Calu3 (cell line): ENCODE measurements at regions of chr16 and their contacts with region 1.

Region 1: GRCh38 chr16:12095275-12096156 is 119.0 kb downstream of the SNX29 start:
- DNase-seq: peak; percentile 76
- H3K4me3 Mint-ChIP-seq: no peak overlapping the region
- H3K27ac Mint-ChIP-seq: no peak overlapping the region
- H3K4me1 Mint-ChIP-seq: peaks cover 13% of the 10 kb centered on the region
- H3K27me3 Mint-ChIP-seq: no peaks in the 10 kb centered on the region
- CTCF ChIP-seq: peak; percentile 94

Region 2: GRCh38 chr16:12141073-12141951 is 45.8 kb after region 1 on chr16:
- CTCF ChIA-PET with region 1: no interaction called
- intact Hi-C with region 1: no loop called
- DNase-seq: no peak
- H3K4me3 Mint-ChIP-seq: no peak overlapping the region
- H3K27ac Mint-ChIP-seq: no peak overlapping the region
- H3K4me1 Mint-ChIP-seq: no peaks in the 10 kb centered on the region
- H3K27me3 Mint-ChIP-seq: no peaks in the 10 kb centered on the region
- CTCF ChIP-seq: no peak

Region 3: GRCh38 chr16:12215277-12216105 is 120.0 kb after region 1 on chr16:
- CTCF ChIA-PET with region 1: no interaction called
- intact Hi-C with region 1: loop called (anchors 1 kb)
- DNase-seq: no peak
- H3K4me3 Mint-ChIP-seq: no peak overlapping the region
- H3K27ac Mint-ChIP-seq: no peak overlapping the region
- H3K4me1 Mint-ChIP-seq: peaks cover 27% of the 10 kb centered on the region
- H3K27me3 Mint-ChIP-seq: no peaks in the 10 kb centered on the region
- CTCF ChIP-seq: peak; percentile 47

Region 4: GRCh38 chr16:12228602-12229499 is 133.3 kb after region 1 on chr16:
- CTCF ChIA-PET with region 1: interaction called, 11 read pairs
- intact Hi-C with region 1: no loop called
- DNase-seq: peak; percentile 79
- H3K4me3 Mint-ChIP-seq: no peak overlapping the region
- H3K27ac Mint-ChIP-seq: no peak overlapping the region
- H3K4me1 Mint-ChIP-seq: peaks cover 25% of the 10 kb centered on the region
- H3K27me3 Mint-ChIP-seq: peaks cover 2% of the 10 kb centered on the region
- CTCF ChIP-seq: peak; percentile 81

Region 5: GRCh38 chr16:12257926-12258561 is 162.5 kb after region 1 on chr16:
- CTCF ChIA-PET with region 1: interaction called, 16 read pairs
- intact Hi-C with region 1: loop called (anchors 1 kb)
- DNase-seq: peak; percentile 43
- H3K4me3 Mint-ChIP-seq: no peak overlapping the region
- H3K27ac Mint-ChIP-seq: no peak overlapping the region
- H3K4me1 Mint-ChIP-seq: peaks cover 9% of the 10 kb centered on the region
- H3K27me3 Mint-ChIP-seq: no peaks in the 10 kb centered on the region
- CTCF ChIP-seq: no peak

Region 6: DNA sequence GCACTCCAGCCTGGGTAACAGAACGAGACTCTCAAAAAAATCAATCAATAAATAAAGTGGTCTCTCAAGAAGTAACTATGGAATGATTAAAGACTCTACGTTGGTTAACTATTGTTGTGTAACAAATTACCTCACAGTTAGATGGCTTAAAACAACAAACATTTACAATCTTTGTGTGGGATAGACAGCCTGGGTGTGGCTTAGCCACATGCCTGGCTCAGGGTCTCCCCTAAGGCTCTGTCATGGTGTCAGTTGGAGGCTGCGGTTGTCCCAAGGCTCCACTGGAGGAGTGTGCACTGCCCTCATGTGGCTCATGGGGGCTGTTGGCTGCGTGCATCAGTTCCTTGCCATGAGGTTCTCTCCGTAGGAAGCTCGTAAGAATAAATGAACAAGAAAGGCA is 175.5 kb after region 1 on chr16:
- CTCF ChIA-PET with region 1: interaction called, 12 read pairs
- intact Hi-C with region 1: no loop called
- DNase-seq: peak; percentile 53
- H3K4me3 Mint-ChIP-seq: no peak overlapping the region
- H3K27ac Mint-ChIP-seq: no peak overlapping the region
- H3K4me1 Mint-ChIP-seq: no peaks in the 10 kb centered on the region
- H3K27me3 Mint-ChIP-seq: no peaks in the 10 kb centered on the region
- CTCF ChIP-seq: no peak

Region 7: DNA sequence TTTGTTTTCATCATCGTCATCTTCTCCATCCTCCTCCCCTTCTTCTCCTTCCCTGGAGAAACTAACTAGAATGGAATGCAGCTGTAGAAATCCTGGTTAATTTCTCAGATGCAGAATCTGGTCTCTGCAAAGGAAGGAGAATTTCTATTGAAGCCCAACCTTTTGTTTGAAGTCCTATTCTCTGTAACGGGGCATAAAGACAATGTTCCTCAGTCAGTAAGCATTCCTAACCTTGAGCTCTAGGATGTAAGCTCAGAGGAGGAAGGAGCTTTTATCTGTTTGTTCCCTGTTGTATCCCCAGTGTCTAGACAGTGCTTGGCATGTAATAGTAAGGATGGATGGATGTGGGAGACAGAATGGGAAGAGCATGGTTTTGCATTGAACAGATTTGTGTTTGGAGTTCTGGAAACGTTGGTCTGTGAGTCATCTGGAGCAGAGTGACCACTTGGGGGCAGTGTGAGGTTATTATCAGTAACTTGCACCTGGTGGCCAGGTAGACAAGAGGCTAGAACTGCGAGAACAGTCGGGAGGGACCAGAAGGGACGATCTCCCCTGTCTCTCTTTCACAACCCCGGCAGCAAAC is 244.7 kb after region 1 on chr16:
- CTCF ChIA-PET with region 1: interaction called, 9 read pairs
- intact Hi-C with region 1: loop called (anchors 1 kb)
- DNase-seq: peak; percentile 68
- H3K4me3 Mint-ChIP-seq: no peak overlapping the region
- H3K27ac Mint-ChIP-seq: no peak overlapping the region
- H3K4me1 Mint-ChIP-seq: peaks cover 24% of the 10 kb centered on the region
- H3K27me3 Mint-ChIP-seq: no peaks in the 10 kb centered on the region
- CTCF ChIP-seq: peak; percentile 68